ENCODE measurements at regions of chr16 and their contacts with region 1.

Region 1: GRCh38 chr16:8905168-8905762 is 23.1 kb downstream of the LITAFD start:
- DNase-seq: peak in 3 of 14 experiments; percentile 37 to 45 (median 38)
- ATAC-seq: peak; percentile 51
- H3K4me3 ChIP-seq: no peak overlapping the region
- H3K4me3 Mint-ChIP-seq: no peak overlapping the region
- H3K27ac ChIP-seq: no peak overlapping the region
- H3K27ac Mint-ChIP-seq: peak overlapping the region; percentile 3
- H3K4me1 ChIP-seq: peaks cover 11% of the 10 kb centered on the region
- H3K4me1 Mint-ChIP-seq: peaks cover 13% of the 10 kb centered on the region
- H3K27me3 ChIP-seq: no peaks in the 10 kb centered on the region
- H3K27me3 Mint-ChIP-seq: no peaks in the 10 kb centered on the region
- CTCF ChIP-seq: peak; percentile 18

Region 2: DNA sequence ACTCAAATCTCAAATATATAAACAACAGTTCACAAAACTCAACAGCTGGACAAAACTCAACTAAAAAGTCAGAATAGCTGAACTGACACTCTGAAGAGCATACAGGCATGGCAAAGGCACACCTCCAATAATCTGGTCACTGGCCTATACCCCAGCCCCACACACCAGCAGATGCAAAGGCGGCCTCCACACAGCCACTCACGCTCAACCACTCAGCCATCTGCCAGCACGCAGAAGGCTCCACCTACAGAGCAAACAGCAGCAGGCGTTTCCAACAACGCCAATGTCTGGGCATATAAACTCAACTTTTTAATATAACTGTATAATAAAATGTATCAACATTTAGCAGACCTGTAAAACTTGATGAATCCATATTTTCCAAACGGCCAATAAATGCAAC is 41.3 kb after region 1 on chr16:
- CTCF ChIA-PET with region 1: no interaction called
- POLR2A ChIA-PET with region 1: no interaction called
- intact Hi-C with region 1: loop called in 1 of 2 experiments (anchors 5 kb)
- DNase-seq: no peak
- ATAC-seq: no peak
- H3K4me3 ChIP-seq: no peak overlapping the region
- H3K4me3 Mint-ChIP-seq: peak overlapping the region; percentile 12
- H3K27ac ChIP-seq: no peak overlapping the region
- H3K27ac Mint-ChIP-seq: peak overlapping the region; percentile 18
- H3K4me1 ChIP-seq: peaks cover 93% of the 10 kb centered on the region
- H3K4me1 Mint-ChIP-seq: peaks cover 99% of the 10 kb centered on the region
- H3K27me3 ChIP-seq: no peaks in the 10 kb centered on the region
- H3K27me3 Mint-ChIP-seq: no peaks in the 10 kb centered on the region
- CTCF ChIP-seq: no peak

Region 3: DNA sequence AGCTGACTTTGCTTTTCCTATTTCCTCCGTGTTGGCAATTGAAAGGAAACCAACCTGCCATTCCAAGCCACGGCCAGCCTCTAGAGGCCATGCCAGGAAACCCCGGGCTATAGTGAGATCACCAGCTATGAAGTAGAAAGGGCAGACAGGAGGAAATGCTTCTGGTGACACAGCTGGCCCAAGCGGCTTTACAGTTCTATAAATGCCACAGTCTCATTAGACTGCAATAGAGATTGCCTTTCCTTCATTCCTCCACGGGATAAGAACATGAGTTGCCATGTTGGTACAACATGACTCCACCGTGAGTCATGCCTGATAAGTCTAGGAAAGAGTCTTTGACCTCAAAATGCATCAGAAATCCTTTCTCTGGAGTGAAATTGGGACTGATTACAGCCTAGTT is 892.0 kb after region 1 on chr16:
- CTCF ChIA-PET with region 1: no interaction called
- POLR2A ChIA-PET with region 1: no interaction called
- intact Hi-C with region 1: no loop called
- DNase-seq: no peak
- ATAC-seq: no peak
- H3K4me3 ChIP-seq: no peak overlapping the region
- H3K4me3 Mint-ChIP-seq: no peak overlapping the region
- H3K27ac ChIP-seq: no peak overlapping the region
- H3K27ac Mint-ChIP-seq: no peak overlapping the region
- H3K4me1 ChIP-seq: no peaks in the 10 kb centered on the region
- H3K4me1 Mint-ChIP-seq: no peaks in the 10 kb centered on the region
- H3K27me3 ChIP-seq: no peaks in the 10 kb centered on the region
- H3K27me3 Mint-ChIP-seq: peaks cover 6% of the 10 kb centered on the region
- CTCF ChIP-seq: no peak